BJ (cell line): ENCODE measurements at regions of chr4 and their contacts with region 1.

Region 1: DNA sequence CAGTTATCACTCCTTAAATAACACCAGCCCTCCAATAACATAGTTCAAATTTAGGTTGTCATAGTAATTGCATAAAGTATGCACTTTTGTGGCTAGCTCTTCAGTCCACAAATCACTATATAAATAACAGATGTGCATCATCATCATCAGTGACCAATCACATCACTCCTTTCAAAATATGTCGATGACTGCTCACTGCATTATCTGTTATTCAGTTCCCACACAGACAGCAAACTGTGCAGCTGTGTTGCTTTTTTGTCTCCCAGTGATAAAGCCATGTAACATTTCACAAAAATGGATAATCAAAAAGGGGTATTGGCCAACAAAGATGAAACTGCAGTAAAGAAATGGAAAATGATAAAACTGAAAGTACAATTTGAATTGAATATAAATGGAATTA is 205.4 kb downstream of the DCLK2 start:
- DNase-seq: peak; percentile 95
- H3K4me3 ChIP-seq: no peak overlapping the region
- H3K27me3 ChIP-seq: no peaks in the 10 kb centered on the region
- CTCF ChIP-seq: no peak

Region 2: DNA sequence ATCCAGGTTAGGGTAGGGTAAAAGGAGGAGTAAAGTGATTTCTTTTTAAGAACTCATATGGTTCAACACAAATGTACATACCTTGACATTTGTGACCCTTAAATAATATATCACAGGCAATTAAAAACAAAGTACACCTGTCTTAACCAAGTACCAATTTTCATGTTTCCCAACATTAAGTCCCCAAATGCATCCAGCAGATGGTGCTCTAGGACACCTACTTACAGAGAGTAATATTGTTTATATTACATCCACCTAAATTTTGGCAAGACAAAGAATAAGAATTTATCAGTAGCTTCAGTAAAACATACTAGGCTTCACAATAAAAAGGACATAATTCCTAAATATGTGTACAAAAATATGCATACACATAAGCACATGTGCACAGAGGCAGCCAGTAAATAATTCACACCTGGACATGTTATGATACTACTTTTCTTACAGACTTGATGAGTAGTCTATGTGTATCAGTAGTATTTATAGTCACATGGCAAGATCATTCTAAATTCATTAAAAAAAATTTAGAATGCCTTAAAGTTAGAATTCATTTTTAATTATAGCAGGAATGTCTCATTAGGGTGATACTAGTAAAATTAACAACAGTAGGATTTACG is 14.3 kb after region 1 on chr4:
- CTCF ChIA-PET with region 1: interaction called, 10 read pairs
- POLR2A ChIA-PET with region 1: no interaction called
- DNase-seq: no peak
- H3K4me3 ChIP-seq: no peak overlapping the region
- H3K27me3 ChIP-seq: no peaks in the 10 kb centered on the region
- CTCF ChIP-seq: peak; percentile 69

Region 3: GRCh38 chr4:150316332-150317205 is 32.9 kb after region 1 on chr4:
- CTCF ChIA-PET with region 1: no interaction called
- POLR2A ChIA-PET with region 1: no interaction called
- DNase-seq: no peak
- H3K4me3 ChIP-seq: no peak overlapping the region
- H3K27me3 ChIP-seq: no peaks in the 10 kb centered on the region
- CTCF ChIP-seq: no peak

Region 4: DNA sequence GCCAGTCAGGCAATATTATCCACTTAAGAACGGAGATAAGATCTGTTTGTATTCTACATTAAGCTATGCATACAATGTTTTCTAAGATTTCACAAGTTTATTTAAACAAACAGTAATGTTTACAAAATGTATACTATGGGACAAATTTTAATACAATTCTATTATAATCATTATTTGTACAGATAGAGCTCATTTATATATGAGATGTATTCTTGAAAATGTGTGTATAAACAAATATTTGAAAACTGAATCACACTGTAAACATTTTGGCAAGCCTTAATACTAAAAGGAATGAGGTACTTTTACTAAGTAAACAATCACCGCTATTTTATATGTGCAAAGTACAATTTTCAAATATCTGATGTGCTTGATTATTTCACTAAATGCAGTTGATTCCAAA is 179.0 kb after region 1 on chr4:
- CTCF ChIA-PET with region 1: no interaction called
- POLR2A ChIA-PET with region 1: no interaction called
- DNase-seq: no peak
- H3K4me3 ChIP-seq: no peak overlapping the region
- H3K27me3 ChIP-seq: no peaks in the 10 kb centered on the region
- CTCF ChIP-seq: no peak

Region 5: GRCh38 chr4:150609101-150609500 is 325.4 kb after region 1 on chr4:
- CTCF ChIA-PET with region 1: no interaction called
- POLR2A ChIA-PET with region 1: no interaction called
- DNase-seq: no peak
- H3K4me3 ChIP-seq: no peak overlapping the region
- H3K27me3 ChIP-seq: no peaks in the 10 kb centered on the region
- CTCF ChIP-seq: no peak